ENCODE measurements at regions of chr17 and their contacts with region 1.

Region 1: DNA sequence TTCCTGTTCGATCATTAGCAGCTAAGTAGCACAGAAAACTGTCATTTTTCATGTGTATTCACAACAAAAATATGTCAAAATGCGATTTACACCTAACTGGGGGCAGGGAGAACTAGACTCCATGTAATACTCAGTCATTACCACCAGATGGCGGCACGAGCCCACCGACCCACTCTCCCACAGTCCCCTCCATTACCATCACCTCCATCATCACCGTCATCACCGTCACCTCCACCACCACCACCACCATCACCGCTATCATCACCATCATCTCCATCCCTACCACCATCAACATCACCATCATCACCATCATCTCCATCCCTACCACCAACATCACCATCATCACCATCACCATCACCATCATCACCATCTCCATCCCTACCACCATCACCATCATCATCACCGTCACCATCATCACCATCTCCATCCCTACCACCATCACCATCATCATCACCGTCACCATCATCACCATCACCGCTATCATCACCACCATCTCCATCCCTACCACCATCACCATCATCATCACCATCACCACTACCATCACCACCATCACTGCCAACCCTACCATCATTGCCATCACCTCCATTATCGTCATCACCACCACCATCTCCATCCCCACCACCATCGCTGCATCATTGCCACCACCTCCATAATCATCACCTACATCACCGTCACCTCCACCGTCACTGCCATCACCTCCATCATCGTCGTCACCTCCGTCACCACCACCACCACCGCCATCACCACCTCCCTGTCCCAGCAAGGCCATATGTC is 14.4 kb downstream of the NDUFAF8 start:
- DNase-seq: peak; percentile 45
- H3K4me3 Mint-ChIP-seq: no peak overlapping the region
- H3K27ac Mint-ChIP-seq: no peak overlapping the region
- H3K4me1 Mint-ChIP-seq: no peaks in the 10 kb centered on the region
- H3K27me3 Mint-ChIP-seq: no peaks in the 10 kb centered on the region
- CTCF ChIP-seq: peak; percentile 72

Region 2: DNA sequence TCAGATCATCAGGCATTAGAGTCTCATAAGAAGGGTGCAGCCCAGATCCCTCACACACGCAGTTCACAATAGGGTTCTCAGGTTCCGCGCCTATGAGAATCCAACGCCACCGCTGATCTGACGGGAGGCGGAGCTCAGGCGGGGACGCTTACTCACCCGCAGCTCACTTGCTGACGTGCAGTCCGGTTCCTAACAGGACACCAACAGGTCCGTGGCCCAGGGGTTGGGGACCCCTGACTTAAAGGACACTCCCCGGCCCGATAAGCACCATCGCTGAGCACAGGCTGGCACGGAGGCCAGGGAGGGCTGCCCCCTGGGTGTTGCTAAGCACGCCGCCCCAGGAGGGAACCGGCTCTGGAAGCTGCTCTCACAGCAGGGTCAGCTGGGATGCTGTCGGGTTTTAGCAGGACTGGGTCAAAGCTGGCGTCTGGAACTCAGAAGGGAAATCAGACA is 111.6 kb after region 1 on chr17:
- CTCF ChIA-PET with region 1: no interaction called
- POLR2A ChIA-PET with region 1: no interaction called
- intact Hi-C with region 1: no loop called
- DNase-seq: peak; percentile 90
- H3K4me3 Mint-ChIP-seq: peak overlapping the region; percentile 60
- H3K27ac Mint-ChIP-seq: peak overlapping the region; percentile 69
- H3K4me1 Mint-ChIP-seq: peaks cover 24% of the 10 kb centered on the region
- H3K27me3 Mint-ChIP-seq: no peaks in the 10 kb centered on the region
- CTCF ChIP-seq: no peak

Region 3: GRCh38 chr17:81484195-81484979 is 230.8 kb after region 1 on chr17:
- CTCF ChIA-PET with region 1: interaction called, 29 read pairs
- POLR2A ChIA-PET with region 1: interaction called, 4 read pairs
- intact Hi-C with region 1: loop called (anchors 1 kb)
- DNase-seq: peak; percentile 70
- H3K4me3 Mint-ChIP-seq: no peak overlapping the region
- H3K27ac Mint-ChIP-seq: no peak overlapping the region
- H3K4me1 Mint-ChIP-seq: no peaks in the 10 kb centered on the region
- H3K27me3 Mint-ChIP-seq: no peaks in the 10 kb centered on the region
- CTCF ChIP-seq: peak; percentile 98

Measured in MCF 10A (cell line).